GM10248 (cell line): ENCODE measurements at regions of chr6 and their contacts with region 1.

Region 1: DNA sequence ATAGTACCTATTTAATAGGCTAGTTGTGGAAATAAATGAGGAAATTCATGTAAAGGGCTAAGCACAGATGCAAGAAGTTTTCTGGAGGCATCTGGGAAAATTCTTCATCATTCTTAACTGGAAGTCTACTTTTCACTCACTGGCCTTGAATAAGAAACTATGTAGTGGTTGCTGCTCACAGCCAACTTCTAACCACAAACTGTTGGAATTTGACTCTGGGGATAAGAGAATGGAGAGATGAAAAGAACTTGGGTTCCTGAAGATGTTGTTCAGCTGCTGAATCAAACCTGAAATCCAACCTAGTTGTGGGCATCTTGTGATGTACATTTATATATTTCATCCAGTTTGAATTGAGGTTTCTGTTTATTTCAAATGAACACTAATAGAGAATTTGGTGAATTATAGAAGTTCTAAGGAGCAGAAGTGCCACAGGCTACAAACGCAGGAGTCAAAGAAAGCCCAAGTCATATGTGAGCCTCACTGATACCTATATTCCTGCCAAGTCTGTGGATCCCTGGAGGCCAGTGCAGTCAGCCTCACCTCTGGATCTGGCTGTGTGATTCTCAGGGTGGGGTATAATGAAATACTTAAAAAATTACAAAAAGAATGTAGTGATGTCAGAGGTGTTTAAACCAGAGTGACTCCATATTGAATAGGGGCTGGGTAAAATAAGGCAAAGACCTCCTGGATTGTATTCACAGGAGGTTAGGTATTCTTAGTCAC is 18.7 kb upstream of the MEI4 start:
- DNase-seq: no peak
- CTCF ChIP-seq: no peak

Region 2: DNA sequence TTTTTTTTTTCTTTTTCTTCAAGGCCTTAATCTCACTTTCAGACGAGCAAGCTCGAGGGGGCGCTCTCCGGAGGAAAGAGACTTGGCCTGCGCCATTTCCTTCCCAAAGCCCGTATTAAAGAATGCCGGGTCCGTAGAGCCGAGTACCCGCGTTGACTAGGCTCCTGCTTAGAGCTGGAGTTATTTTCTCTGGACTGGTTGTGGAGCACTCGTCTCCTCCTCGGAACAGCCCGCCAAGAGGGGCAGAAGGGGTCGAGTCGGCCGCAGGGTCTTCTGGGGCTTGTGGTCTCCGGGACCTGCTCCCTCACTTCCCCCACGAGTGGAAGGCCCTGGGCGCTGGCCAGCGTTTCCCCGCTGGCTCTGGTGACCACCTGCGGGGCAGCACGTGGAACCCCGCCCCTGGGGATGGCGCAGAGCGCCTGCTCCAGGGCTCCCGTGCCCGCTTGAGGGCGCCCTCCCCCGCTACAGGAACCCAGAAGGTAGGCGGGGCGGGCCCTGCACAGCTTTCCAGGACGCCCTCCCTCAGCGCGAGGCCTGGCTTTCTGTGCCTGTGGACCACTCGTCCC is 16.0 kb after region 1 on chr6:
- CTCF ChIA-PET with region 1: interaction called, 13 read pairs
- POLR2A ChIA-PET with region 1: no interaction called
- DNase-seq: peak; percentile 28
- CTCF ChIP-seq: peak; percentile 23